Caco-2 (cell line): ENCODE measurements at regions of chr1 and their contacts with region 1.

Region 1: GRCh38 chr1:180863158-180863775 is 49.4 kb upstream of the KIAA1614 start:
- DNase-seq: peak in 1 of 2 experiments; percentile 50
- H3K4me3 ChIP-seq: no peak overlapping the region
- H3K4me3 Mint-ChIP-seq: no peak overlapping the region
- H3K27ac Mint-ChIP-seq: no peak overlapping the region
- H3K4me1 ChIP-seq: peaks cover 20% of the 10 kb centered on the region
- H3K4me1 Mint-ChIP-seq: peaks cover 8% of the 10 kb centered on the region
- H3K27me3 ChIP-seq: no peaks in the 10 kb centered on the region
- H3K27me3 Mint-ChIP-seq: no peaks in the 10 kb centered on the region
- CTCF ChIP-seq: peak; percentile 56 to 71

Region 2: DNA sequence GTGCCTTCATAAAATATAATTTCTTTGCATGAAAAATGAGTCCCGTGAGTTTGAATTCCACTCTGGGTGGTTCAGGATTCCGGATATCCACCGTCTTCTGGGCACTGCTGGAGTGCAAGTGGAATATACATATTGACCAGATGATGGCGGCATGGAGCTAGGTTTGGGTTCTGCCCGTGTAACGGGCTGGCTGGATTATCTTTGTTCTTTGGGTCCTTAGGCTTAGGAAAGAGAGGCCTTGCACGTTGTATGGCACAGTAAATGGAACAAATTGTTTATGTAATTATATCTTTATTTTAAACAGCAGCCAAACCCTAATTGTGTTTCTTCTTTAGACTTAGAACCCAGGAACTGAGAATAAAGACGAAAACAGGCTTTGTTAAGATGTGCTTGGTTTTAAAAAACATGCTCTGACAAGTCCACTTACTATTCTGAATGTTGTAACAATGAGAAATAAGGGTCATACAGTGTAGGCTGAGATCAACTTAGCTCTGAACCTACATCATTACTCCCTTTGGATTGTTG is 347.3 kb before region 1 on chr1:
- CTCF ChIA-PET with region 1: interaction called, 13 read pairs
- POLR2A ChIA-PET with region 1: no interaction called
- intact Hi-C with region 1: loop called (anchors 5 kb)
- DNase-seq: peak; percentile 68 to 80
- H3K4me3 ChIP-seq: no peak overlapping the region
- H3K4me3 Mint-ChIP-seq: no peak overlapping the region
- H3K27ac Mint-ChIP-seq: no peak overlapping the region
- H3K4me1 ChIP-seq: 0 out of 2 replicates have a peak, but pooled peaks cover 7% of the 10 kb centered on the region
- H3K4me1 Mint-ChIP-seq: peaks cover 16% of the 10 kb centered on the region
- H3K27me3 ChIP-seq: no peaks in the 10 kb centered on the region
- H3K27me3 Mint-ChIP-seq: no peaks in the 10 kb centered on the region
- CTCF ChIP-seq: peak; percentile 80 to 82

Region 3: GRCh38 chr1:180533266-180533987 is 329.8 kb before region 1 on chr1:
- CTCF ChIA-PET with region 1: no interaction called
- POLR2A ChIA-PET with region 1: no interaction called
- intact Hi-C with region 1: loop called (anchors 5 kb)
- DNase-seq: peak; percentile 59 to 77
- H3K4me3 ChIP-seq: no peak overlapping the region
- H3K4me3 Mint-ChIP-seq: no peak overlapping the region
- H3K27ac Mint-ChIP-seq: no peak overlapping the region
- H3K4me1 ChIP-seq: peaks cover 6% of the 10 kb centered on the region; the same call in 1 of the 2 replicates
- H3K4me1 Mint-ChIP-seq: peaks cover 10% of the 10 kb centered on the region
- H3K27me3 ChIP-seq: no peaks in the 10 kb centered on the region
- H3K27me3 Mint-ChIP-seq: no peaks in the 10 kb centered on the region
- CTCF ChIP-seq: peak; percentile 72 to 74

Region 4: GRCh38 chr1:180778782-180779398 is 84.4 kb before region 1 on chr1:
- CTCF ChIA-PET with region 1: interaction called, 9 read pairs
- POLR2A ChIA-PET with region 1: no interaction called
- intact Hi-C with region 1: loop called (anchors 5 kb)
- DNase-seq: peak; percentile 39 to 43
- H3K4me3 ChIP-seq: no peak overlapping the region
- H3K4me3 Mint-ChIP-seq: no peak overlapping the region
- H3K27ac Mint-ChIP-seq: no peak overlapping the region
- H3K4me1 ChIP-seq: 0 out of 2 replicates have a peak, but pooled peaks cover under 1% of the 10 kb centered on the region
- H3K4me1 Mint-ChIP-seq: peaks cover 24% of the 10 kb centered on the region
- H3K27me3 ChIP-seq: no peaks in the 10 kb centered on the region
- H3K27me3 Mint-ChIP-seq: no peaks in the 10 kb centered on the region
- CTCF ChIP-seq: peak; percentile 53 to 81

Region 5: DNA sequence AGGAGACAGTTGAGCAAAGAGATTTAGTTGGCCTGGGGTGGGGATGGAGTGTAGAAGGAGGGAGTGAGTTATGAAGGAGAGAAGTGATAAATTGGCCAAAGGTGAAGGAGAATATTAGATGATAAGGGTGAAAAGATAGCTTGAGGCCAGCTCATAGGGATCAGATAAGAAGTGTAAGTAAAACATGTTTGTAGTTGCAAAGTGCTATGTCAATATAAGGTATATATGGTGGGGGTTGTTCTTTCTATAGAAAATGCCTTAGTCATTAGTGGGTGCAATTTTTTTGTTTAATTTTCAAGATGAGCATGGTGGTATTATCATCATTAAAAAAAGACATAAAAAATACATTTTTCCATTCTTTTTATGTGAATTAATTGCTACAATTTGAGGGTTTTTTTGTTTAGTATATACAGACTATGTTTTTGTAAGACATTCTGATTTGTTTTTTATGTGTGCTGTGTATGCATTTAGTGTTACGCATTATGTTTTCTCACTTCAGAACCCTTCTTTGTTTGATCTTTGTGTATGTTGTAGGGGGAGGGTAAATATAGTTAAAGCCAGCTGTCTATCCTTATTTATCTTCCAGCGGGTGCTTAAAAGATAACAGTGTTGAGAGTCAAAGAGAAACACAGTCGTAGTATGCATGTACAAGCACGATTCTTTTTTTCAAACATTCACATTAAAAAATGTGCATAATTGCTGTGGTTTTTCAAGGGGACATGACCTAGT is 48.2 kb before region 1 on chr1:
- CTCF ChIA-PET with region 1: no interaction called
- POLR2A ChIA-PET with region 1: no interaction called
- intact Hi-C with region 1: loop called (anchors 5 kb)
- DNase-seq: peak in 1 of 2 experiments; percentile 26
- H3K4me3 ChIP-seq: no peak overlapping the region
- H3K4me3 Mint-ChIP-seq: peak overlapping the region; percentile 41
- H3K27ac Mint-ChIP-seq: no peak overlapping the region
- H3K4me1 ChIP-seq: peaks cover 35% of the 10 kb centered on the region
- H3K4me1 Mint-ChIP-seq: peaks cover 19% of the 10 kb centered on the region
- H3K27me3 ChIP-seq: no peaks in the 10 kb centered on the region
- H3K27me3 Mint-ChIP-seq: no peaks in the 10 kb centered on the region
- CTCF ChIP-seq: no peak